ENCODE measurements at regions of chr22 and their contacts with region 1.

Region 1: GRCh38 chr22:36052505-36053270 is 24.1 kb upstream of the RBFOX2 start:
- DNase-seq: no peak

Region 2: GRCh38 chr22:36110306-36110881 is 57.7 kb after region 1 on chr22:
- intact Hi-C with region 1: loop called in 1 of 2 experiments (anchors 10 kb)
- DNase-seq: peak; percentile 60

Measured in posterior vena cava (tissue), 2 donors.